Common myeloid progenitor, CD34-positive (primary cell): ENCODE measurements at regions of chr5 and their contacts with region 1.

Region 1: DNA sequence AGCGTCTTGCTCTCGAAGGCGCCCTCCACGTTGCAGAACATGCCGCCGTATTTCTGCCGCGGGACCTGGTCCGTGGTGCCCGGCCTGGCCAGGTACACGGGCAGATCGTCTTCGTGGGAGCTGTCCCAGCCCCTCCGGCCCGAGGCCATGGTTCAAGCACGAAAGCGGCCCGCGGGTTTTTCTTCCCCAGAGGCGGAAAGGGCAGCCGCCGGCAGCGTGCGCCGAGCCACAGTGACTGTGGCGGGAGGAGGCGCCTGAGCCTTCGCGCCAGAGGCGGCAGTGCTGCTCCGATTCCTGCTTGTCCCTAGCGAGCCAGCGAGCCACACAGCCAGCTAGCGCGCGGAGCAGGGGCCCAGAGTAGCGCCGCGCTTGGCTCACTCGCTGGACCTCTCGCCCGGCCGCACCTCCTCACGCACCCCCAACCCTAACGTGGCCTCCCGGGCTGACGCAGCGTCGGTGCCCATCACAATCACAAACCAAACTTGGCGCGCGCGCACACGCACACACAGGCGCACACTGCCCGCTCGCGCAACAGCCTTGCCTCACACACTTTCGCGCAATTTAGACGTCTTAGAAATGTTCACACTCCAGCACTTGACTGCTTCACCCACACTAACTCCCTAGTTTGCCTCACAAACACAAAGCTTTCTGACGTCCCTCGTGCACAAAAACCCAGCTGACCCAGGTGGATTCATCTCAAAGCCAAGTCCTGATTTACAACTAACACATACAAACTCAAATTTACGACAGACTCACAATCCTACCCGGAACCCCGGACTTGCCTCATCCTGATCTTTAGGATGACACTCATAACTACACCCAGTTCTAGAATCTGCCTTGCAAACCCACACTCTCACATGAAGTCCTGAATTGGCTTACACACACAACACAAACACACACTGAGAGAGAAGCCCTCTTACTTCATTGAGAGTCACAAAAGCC is at the start of gene DPYSL3:
- DNase-seq: peak; percentile 56 to 78 (median 65)
- H3K4me3 ChIP-seq: peak within 1 kb of the TSS; percentile 28 to 77 (median 66)
- H3K27ac ChIP-seq: no peak within 1 kb of the TSS
- H3K4me1 ChIP-seq: peaks cover 0 to 26% (median 15%) of the 10 kb centered on the region in 4 experiments
- H3K27me3 ChIP-seq: peaks cover 13 to 45% (median 23%) of the 10 kb centered on the region in 5 experiments

Region 2: DNA sequence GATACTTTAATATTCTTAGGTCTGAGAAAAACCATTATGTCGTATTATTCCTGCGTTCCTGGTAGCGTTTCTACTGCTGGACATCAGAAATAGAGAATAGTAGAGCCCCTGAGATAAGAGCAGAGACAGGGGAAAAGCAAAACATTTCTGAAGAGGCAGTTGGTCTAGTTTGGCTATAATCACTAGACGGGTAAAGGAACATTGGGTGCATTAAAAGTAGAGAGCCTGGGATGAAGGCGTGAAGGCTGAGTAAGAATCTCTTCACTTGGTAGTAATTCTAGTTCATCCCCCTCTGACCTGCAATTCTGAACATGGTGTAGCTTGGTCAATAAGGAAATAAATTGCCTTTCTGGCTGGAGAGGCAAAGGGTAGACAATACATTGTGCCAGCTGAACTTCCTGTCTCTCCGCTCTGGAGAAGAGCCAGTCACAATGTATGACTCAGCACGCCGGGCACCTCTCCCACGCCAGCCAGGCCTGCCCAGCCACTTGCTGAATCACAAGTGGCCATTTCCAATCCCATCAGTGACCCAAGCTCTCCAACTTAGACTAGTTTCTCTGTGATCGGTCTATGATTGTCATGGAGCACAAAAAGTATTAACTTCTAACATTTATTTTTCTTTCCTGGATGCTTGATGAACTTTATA is 199.8 kb before region 1 on chr5:
- CTCF ChIA-PET with region 1: no interaction called
- POLR2A ChIA-PET with region 1: no interaction called
- DNase-seq: peak; percentile 25 to 59 (median 52)
- H3K4me3 ChIP-seq: no peak overlapping the region
- H3K27ac ChIP-seq: no peak overlapping the region
- H3K4me1 ChIP-seq: peaks cover 0 to 14% (median 3%) of the 10 kb centered on the region in 4 experiments
- H3K27me3 ChIP-seq: no peaks in the 10 kb centered on the region

Region 3: DNA sequence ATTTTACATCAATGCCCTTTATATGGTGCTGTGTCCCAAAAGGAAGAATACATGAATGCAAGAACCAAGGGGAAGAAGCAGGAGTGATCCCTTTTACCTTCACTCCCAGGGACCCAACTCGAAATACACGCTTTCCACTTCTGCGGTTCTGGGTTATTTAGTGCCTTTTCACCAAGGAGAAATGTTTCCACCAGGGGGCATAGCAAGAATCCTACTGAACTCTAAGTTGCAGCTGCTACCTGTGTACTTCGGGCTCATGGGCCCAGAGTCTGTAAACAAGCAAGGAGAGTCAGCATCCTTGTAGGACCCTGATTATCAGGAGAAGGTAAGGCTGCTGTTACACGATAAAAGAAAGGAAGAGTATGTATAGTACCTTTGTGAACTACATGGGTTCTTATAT is 45.8 kb before region 1 on chr5:
- CTCF ChIA-PET with region 1: interaction called, 16 read pairs
- POLR2A ChIA-PET with region 1: no interaction called
- DNase-seq: peak; percentile 77 to 86 (median 82)
- H3K4me3 ChIP-seq: no peak overlapping the region
- H3K27ac ChIP-seq: no peak overlapping the region
- H3K4me1 ChIP-seq: peaks cover 0 to 8% (median 0%) of the 10 kb centered on the region in 4 experiments
- H3K27me3 ChIP-seq: peaks cover 0 to 2% (median 0%) of the 10 kb centered on the region in 5 experiments

Region 4: GRCh38 chr5:147539053-147539452 is 29.1 kb after region 1 on chr5:
- CTCF ChIA-PET with region 1: interaction called, 16 read pairs
- POLR2A ChIA-PET with region 1: no interaction called
- DNase-seq: no peak
- H3K4me3 ChIP-seq: no peak overlapping the region
- H3K27ac ChIP-seq: no peak overlapping the region
- H3K4me1 ChIP-seq: no peaks in the 10 kb centered on the region
- H3K27me3 ChIP-seq: no peaks in the 10 kb centered on the region